Right ventricle myocardium superior (tissue), 1 donor: ENCODE measurements at regions of chr1 and their contacts with region 1.

Region 1: GRCh38 chr1:222465211-222466041 is 82.5 kb downstream of the HHIPL2 start:
- DNase-seq: peak; percentile 95
- ATAC-seq: peak; percentile 100

Region 2: DNA sequence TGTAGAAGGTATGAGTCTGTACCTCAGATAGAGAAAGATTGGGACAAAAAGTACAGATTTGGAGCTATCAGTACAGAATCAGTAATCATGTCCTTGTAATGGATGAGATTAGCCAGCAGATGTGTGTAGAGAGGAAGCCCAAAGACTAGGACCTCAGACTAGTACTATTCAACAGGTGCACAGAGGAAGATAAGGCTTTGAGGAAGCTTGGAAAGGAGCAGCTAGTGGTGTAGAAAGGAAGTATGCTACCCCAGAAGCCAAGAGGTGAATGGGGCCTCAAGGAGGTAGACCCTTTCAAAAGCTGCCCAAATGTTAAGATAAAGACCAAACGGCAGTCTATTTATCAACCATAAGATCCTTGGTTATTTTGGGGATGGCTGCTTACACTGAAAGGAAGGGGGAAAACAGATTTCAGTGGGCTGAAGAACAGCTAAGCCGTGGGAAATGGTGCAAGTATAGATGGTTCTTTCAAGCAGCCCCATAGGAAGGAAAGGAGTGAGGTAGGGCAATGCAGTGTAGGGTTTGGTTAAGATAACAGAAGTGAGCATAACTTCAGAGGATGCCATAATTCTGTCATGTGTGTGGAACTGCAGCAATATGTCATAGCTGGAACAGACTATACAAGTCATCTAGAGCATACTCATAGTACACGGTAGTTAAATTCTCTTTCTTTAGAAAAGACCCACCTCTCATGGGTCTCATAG is 139.3 kb before region 1 on chr1:
- intact Hi-C with region 1: no loop called
- DNase-seq: no peak
- ATAC-seq: no peak

Region 3: DNA sequence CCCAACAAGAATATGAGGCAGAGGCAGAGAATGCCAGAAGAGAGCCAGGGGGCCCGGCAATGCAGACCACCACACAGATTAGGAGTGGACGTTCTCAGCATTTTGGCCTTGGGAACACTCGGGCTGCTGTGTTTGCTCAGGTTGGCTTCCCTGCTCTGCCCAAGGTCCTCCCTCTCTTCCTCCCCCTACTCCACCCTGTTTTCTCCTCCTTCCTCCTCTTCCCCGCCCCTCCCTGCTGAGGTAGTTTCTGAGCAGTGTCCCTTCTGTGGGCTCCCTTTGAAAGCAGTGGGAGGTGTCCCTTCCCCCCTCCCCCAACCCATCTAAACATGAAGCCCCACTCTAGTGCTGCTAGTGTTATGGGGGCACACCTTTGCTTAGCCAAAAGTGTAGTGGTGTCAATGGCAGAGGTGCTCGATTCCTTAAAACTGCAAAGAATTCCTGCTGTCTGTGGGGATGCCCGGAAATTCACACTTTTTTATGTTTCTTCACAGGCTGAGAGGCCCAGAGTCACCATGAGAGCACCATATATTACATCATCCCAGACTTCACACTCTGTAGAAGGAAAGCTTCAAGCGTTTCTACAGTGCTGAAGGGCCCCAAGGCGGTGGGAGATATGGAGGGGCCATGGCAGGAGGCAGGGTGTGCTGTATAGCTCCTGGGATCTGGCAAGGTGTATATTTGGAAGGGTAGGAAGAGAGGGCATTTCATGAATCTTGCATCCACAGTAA is 82.7 kb after region 1 on chr1 and contains the start of gene HHIPL2:
- intact Hi-C with region 1: no loop called
- DNase-seq: no peak
- ATAC-seq: no peak
- total RNA-seq, gene HHIPL2: not detected

Region 4: DNA sequence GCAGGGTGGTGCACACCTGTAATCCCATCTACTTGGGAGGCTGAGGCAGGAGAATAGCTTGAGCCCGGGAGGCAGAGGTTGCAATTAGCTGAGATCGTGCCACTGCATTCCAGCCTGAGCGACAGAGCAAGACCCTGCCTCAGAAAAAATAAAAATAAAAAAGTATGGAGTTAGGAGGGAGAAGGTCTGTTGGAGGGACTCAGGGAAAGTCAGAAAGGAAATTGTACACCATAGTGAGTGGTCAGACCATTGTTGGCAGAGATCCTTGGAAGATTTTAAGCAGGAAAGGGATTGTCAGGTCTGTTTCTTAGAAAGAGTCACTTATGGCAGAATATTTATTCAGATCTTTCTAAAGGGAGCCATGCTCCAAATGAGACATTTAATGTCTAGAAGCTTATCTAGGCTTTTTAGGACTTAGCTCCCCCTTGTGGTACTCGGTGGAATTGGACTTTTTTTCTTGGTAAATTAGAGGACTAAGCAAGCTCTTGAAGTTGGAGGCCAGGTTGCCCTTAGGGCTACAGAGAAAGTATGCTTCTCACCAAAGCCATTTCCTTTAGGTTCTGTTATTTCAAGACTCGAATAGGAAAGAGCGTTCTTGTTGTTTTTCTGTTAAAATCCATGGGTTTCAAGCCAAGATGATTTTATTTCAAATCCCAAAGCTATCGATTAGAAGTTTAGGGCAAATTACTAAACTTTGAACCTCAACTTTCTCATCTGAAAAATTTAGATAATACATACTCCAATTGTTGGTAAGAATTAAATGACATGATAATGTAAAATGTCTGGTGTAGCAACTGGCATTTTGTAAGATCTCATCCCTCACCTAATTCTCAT is 169.0 kb after region 1 on chr1:
- intact Hi-C with region 1: loop called (anchors 5 kb)
- DNase-seq: no peak
- ATAC-seq: peak; percentile 80

Region 5: DNA sequence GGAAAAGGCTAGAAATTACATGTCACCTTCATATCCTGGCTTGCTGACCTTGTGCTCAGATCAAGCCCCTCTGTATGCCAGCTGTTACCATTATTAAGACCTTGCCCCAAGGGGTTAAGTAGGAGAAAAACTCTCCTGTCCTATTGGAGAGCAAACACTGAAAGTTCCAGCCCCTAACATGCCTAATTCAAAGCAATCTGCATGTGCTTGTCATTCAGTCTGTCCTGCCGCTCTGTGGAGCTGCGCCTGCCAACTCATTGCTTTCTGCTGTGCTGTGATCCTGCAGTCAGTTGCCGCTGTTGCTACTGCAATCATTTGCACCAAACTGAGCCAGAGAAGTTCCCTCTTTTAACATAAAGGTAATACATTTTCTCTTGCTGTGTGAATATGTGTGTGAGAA is 462.8 kb after region 1 on chr1:
- intact Hi-C with region 1: no loop called
- DNase-seq: peak; percentile 79
- ATAC-seq: peak; percentile 95